WTC11 (cell line): ENCODE measurements at regions of chr17 and their contacts with region 1.

Region 1: DNA sequence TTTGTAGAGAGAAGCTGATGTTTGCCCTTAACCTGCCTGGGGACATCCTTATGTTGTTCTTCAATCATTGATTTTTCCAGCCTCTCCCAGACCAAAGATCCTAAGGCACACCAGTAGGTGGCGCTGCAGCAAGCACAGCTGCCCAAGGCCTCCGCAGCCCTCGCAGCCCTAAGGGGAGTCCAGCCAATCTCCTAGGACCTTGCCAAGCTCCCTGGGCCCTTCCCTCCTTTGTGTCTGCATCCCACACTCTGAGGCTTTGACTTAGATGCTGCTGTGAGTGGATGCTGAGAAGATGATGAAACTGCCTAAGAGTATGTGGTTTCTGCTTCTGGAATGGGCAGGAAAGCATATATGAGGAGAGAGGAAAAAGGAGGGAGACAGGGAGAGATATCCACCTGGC is 47.1 kb downstream of the SPACA3 start:
- DNase-seq: peak; percentile 85
- ATAC-seq: peak; percentile 98
- H3K4me3 Mint-ChIP-seq: no peak overlapping the region
- H3K27ac Mint-ChIP-seq: no peak overlapping the region
- H3K4me1 Mint-ChIP-seq: peaks cover 5% of the 10 kb centered on the region; the same call in 1 of the 2 replicates
- H3K27me3 Mint-ChIP-seq: peaks cover 19% of the 10 kb centered on the region
- CTCF ChIP-seq: peak; percentile 80

Region 2: DNA sequence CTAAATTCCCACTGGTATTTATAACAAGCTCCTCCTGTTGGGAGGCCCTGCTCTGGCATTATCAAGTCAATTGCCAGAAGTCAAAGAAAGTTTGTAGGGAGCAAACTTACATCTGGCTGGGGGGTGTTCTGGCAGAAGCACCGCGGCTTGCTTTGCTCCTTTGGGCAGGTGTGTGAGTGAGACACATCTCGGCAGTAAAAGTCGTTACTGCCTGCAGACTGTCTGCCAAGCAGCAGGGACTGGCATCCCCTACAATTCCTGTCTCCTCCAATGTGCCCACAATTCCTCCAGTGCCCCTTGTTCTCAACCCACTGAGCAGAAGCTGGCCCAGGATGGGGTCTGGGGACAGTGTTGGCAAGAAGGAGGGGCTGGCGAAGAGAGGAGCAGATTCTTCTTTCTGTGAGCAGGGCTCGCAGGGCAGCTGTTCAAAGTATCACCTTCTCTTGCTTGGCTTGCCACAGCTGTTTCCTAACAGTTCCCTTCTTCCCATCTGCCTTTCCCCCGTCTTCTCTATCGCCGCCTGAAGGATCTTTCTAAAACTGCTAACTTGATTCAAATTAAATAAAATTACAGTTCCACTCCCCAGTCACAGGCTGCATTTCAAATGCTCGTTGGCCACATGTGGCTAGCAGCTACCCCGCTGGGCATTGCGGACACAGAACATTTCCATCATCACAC is 16.9 kb before region 1 on chr17:
- CTCF ChIA-PET with region 1: interaction called, 34 read pairs
- POLR2A ChIA-PET with region 1: no interaction called
- DNase-seq: no peak
- ATAC-seq: peak; percentile 65
- H3K4me3 Mint-ChIP-seq: no peak overlapping the region
- H3K27ac Mint-ChIP-seq: no peak overlapping the region
- H3K4me1 Mint-ChIP-seq: peaks cover 32% of the 10 kb centered on the region
- H3K27me3 Mint-ChIP-seq: peaks cover 12% of the 10 kb centered on the region; the same call in 1 of the 2 replicates
- CTCF ChIP-seq: peak; percentile 27; the same call in 1 of the 2 replicates

Region 3: DNA sequence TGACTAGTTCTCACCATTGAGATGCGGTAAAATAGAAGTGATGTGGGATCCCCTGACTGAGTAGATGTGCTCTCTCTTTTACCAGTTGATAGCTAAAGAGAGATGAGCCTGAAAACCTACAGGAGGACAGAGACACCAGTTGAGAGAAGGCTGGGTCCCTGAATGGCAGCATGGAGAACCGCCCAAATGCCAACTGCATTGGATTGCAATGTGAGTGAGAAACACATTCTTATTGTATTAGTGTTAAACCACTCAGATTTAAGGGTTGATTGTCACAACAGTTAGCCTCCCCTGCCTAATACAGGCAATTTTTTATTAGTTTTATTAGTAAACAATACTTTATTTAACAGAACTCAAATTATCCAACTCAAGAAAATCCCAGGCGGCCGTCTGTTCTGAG is 14.1 kb after region 1 on chr17:
- CTCF ChIA-PET with region 1: interaction called, 15 read pairs
- POLR2A ChIA-PET with region 1: no interaction called
- DNase-seq: no peak
- ATAC-seq: no peak
- H3K4me3 Mint-ChIP-seq: no peak overlapping the region
- H3K27ac Mint-ChIP-seq: no peak overlapping the region
- H3K4me1 Mint-ChIP-seq: no peaks in the 10 kb centered on the region
- H3K27me3 Mint-ChIP-seq: peaks cover 26% of the 10 kb centered on the region
- CTCF ChIP-seq: no peak

Region 4: GRCh38 chr17:33520426-33521330 is 481.9 kb after region 1 on chr17:
- CTCF ChIA-PET with region 1: interaction called, 11 read pairs
- POLR2A ChIA-PET with region 1: no interaction called
- DNase-seq: peak; percentile 85
- ATAC-seq: peak; percentile 82
- H3K4me3 Mint-ChIP-seq: no peak overlapping the region
- H3K27ac Mint-ChIP-seq: no peak overlapping the region
- H3K4me1 Mint-ChIP-seq: peaks cover 2% of the 10 kb centered on the region; the same call in 1 of the 2 replicates
- H3K27me3 Mint-ChIP-seq: no peaks in the 10 kb centered on the region; the same call in 1 of the 2 replicates
- CTCF ChIP-seq: peak; percentile 70